OCI-LY7 (cell line): ENCODE measurements at regions of chr13 and their contacts with region 1.

Region 1: GRCh38 chr13:23776698-23777574 is 112.3 kb downstream of the MIPEP start:
- DNase-seq: peak; percentile 78
- H3K4me3 ChIP-seq: peak overlapping the region; percentile 35
- H3K27ac ChIP-seq: peak overlapping the region; percentile 77
- H3K4me1 ChIP-seq: peaks cover 33% of the 10 kb centered on the region
- CTCF ChIP-seq: no peak

Region 2: DNA sequence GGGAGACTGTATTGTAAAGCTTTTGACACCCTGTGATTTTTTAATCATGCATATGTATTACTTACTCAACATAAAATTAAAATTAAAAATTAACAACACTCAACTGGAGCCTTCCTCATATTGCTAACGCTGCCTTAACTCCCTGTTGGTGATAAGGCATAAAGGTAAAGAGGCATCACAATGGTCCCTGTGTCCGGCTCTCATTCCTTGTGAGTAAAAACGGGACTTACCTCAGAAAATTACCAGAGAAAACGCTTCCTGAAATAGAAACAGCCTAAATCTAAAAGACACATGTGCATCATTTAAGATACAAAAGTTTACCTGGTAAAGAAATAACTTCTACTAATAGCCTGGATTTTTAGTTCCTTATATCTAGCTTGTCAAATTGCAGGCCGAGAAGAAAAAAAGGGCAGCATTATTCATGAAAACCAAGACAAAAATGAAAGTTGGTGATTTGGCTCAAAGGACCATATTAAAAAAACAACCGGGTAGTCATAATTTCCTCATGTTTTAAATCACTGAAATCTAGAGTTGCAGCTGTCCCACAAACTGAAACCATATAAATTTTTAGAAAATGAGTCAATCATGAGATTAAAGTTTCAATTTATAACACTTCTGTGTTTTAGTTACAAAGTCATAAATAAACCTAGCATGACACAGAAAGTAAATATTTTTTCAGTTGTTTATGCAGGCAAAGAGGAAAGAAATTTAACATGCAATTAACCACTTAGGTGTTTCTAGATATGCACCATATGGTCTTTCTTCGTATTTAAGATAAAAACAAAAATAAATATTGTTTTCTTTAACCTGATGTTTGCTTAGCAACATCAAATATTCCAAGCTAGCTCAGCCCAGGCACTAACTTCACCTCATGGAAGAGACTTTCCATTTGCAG is 17.6 kb after region 1 on chr13:
- CTCF ChIA-PET with region 1: interaction called, 3 read pairs
- POLR2A ChIA-PET with region 1: interaction called, 18 read pairs
- intact Hi-C with region 1: no loop called
- DNase-seq: peak; percentile 32
- H3K4me3 ChIP-seq: no peak overlapping the region
- H3K27ac ChIP-seq: peak overlapping the region; percentile 36
- H3K4me1 ChIP-seq: peaks cover 19% of the 10 kb centered on the region
- CTCF ChIP-seq: no peak